Transverse colon (tissue), 4 donors: ENCODE measurements at regions of chr1 and their contacts with region 1.

Region 1: GRCh38 chr1:181479137-181479745 is 4.1 kb upstream of the CACNA1E start:
- DNase-seq: peak; percentile 26
- H3K4me3 ChIP-seq: no peak overlapping the region
- H3K27ac ChIP-seq: no peak overlapping the region
- H3K4me1 ChIP-seq: peaks cover 0 to 14% (median 7%) of the 10 kb centered on the region in 4 donors
- H3K27me3 ChIP-seq: peaks cover 39% of the 10 kb centered on the region
- CTCF ChIP-seq: peak; percentile 65 to 76 (median 72)
- EP300 ChIP-seq: no peak
- POLR2A ChIP-seq: no peak

Region 2: GRCh38 chr1:181676269-181676668 is 197.0 kb after region 1 on chr1:
- in situ Hi-C with region 1: loop called in 2 of 4 experiments (anchors 10 kb)
- intact Hi-C with region 1: no loop called
- DNase-seq: peak; percentile 49
- H3K4me3 ChIP-seq: no peak overlapping the region
- H3K27ac ChIP-seq: no peak overlapping the region
- H3K4me1 ChIP-seq: no peaks in the 10 kb centered on the region
- H3K27me3 ChIP-seq: no peaks in the 10 kb centered on the region
- CTCF ChIP-seq: peak; percentile 22 to 62 (median 45)
- EP300 ChIP-seq: no peak
- POLR2A ChIP-seq: no peak

Region 3: DNA sequence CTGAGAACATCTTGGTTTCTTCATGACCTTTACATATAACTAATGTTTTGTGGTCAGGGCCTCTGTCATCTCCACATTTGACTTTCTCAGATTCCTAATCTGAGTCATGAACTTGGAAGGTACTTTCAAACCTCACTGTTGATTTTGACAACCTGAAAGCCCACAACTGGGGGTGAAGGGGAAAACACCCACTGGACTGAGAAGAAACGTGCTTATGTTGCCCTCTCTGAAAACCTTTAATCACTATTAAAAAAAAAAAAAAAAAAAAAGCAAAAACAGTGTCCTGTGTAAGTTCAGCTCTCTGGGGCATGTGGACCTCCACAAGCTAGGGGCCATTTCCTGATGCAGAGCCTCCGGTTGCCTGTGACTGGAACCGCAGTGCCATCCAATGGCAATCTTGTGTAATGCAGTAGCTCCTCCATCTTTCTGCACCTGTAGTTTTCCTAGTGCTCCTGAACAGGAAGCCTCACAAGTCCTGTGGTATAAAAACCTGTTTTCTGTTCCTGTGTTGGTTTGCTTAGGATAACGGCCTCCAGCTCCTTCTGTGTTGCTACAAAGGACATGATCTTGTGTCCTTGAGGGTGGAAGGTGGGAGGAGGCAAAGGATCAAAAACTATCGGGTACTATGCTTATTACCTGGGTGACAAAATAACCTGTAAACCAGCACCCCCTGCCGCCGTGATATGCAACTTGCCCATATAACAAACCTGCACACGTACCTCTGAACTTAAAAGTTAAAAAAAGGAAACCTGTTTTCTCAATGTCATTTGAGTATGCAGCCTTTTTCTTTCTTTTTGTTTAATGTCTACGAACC is 457.7 kb after region 1 on chr1:
- in situ Hi-C with region 1: loop called in 2 of 4 experiments (anchors 25 kb)
- intact Hi-C with region 1: no loop called
- DNase-seq: peak; percentile 34
- H3K4me3 ChIP-seq: no peak overlapping the region
- H3K27ac ChIP-seq: no peak overlapping the region
- H3K4me1 ChIP-seq: no peaks in the 10 kb centered on the region
- H3K27me3 ChIP-seq: no peaks in the 10 kb centered on the region
- CTCF ChIP-seq: peak; percentile 26 to 56 (median 42)
- EP300 ChIP-seq: no peak
- POLR2A ChIP-seq: no peak

Region 4: GRCh38 chr1:182069028-182069466 is 589.8 kb after region 1 on chr1:
- in situ Hi-C with region 1: loop called in 3 of 4 experiments (anchors 10 to 25 kb)
- intact Hi-C with region 1: no loop called
- DNase-seq: peak; percentile 54
- H3K4me3 ChIP-seq: no peak overlapping the region
- H3K27ac ChIP-seq: no peak overlapping the region
- H3K4me1 ChIP-seq: no peaks in the 10 kb centered on the region
- H3K27me3 ChIP-seq: peaks cover 17% of the 10 kb centered on the region
- CTCF ChIP-seq: peak; percentile 27 to 78 (median 53)
- EP300 ChIP-seq: no peak
- POLR2A ChIP-seq: no peak